ENCODE measurements at regions of chr13 and their contacts with region 1.

Region 1: DNA sequence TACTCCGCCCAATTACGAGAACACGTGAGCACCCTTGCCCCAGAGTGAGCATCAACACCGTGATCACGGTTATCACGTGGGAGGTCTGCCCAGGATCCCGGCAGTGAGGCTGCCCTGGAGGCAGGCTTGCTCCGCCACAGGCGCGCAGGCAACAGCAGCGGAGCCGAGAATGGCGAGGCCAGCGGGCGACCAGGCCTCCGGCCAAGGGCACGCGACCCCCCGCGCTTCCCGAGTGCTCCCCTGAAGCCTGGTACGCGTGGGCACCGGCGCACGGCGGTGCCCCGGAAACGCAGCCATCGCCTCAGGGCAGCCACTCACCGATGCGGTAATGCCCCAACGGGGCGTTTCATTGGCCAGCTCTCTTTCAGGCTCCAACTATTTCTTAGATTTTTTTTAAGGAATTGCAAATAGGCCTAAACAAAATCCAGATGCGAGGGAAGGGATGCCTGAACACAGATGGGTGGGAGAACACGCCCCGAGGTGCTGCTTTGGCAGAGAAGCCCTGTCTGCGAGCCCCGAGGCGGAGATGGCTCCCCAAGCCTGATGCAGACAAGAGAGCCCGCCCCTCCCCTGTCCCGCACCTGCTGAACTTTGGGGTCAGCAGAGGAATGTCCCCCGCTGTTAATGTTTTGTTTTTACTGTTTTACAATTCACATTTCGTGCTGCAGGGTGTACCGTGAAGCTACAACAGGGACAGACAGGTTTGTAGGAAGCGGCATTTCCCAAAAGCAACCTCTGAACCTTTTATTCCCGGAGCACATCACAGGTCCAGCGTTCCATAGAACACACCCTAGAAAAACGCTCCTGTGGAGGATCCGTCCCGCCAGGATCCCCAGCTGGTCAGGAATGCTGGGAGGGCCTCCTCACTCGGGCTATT is 132.7 kb downstream of the ZDHHC20 start:
- DNase-seq: peak in 9 of 10 donors; percentile 38 to 74 (median 55)
- H3K4me3 ChIP-seq: peak overlapping the region; percentile 37 to 75 (median 61)
- H3K27ac ChIP-seq: peak overlapping the region in 57 of 59 donors; percentile 15 to 88 (median 72)
- H3K27me3 ChIP-seq: no peaks in the 10 kb centered on the region
- CTCF ChIP-seq: peak in 1 of 56 donors; percentile 7

Region 2: DNA sequence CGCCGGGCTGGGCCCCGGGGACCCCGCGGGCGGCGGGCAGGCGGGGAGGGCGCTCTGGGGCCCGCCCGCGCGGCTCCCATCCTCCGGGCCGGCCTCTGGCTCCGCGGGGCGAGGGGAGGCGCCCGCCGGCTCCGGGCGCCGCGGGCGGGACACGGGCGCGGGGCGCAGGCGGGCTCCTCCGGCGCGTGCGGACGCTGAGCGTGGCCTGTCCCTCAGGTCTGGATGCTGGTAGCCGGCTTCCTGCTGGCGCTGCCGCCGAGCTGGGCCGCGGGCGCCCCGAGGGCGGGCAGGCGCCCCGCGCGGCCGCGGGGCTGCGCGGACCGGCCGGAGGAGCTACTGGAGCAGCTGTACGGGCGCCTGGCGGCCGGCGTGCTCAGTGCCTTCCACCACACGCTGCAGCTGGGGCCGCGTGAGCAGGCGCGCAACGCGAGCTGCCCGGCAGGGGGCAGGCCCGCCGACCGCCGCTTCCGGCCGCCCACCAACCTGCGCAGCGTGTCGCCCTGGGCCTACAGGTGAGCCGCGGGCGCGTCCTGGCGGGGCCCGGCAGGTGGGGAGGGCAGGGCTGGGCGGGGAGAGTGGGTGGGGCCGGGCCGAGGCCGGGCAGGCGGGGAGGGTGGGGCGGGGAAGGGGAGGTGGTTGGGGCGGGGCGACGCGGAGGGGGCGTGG is 622.5 kb before region 1 on chr13:
- intact Hi-C with region 1: no loop called
- DNase-seq: peak in 9 of 10 donors; percentile 46 to 84 (median 59)
- H3K4me3 ChIP-seq: peak overlapping the region in 57 of 59 donors; percentile 21 to 90 (median 52)
- H3K27ac ChIP-seq: peak overlapping the region in 37 of 59 donors; percentile 13 to 86 (median 71)
- H3K27me3 ChIP-seq: no peaks in the 10 kb centered on the region
- CTCF ChIP-seq: peak in 45 of 56 donors; percentile 15 to 60 (median 40)

Region 3: GRCh38 chr13:21420706-21421105 is 94.3 kb after region 1 on chr13:
- intact Hi-C with region 1: loop called in 1 of 2 experiments (anchors 10 kb)
- DNase-seq: no peak
- H3K4me3 ChIP-seq: no peak overlapping the region
- H3K27ac ChIP-seq: peak overlapping the region in 10 of 59 donors; percentile 18 to 69 (median 53)
- H3K27me3 ChIP-seq: no peaks in the 10 kb centered on the region
- CTCF ChIP-seq: no peak